ENCODE measurements at regions of chr22 and their contacts with region 1.

Region 1: GRCh38 chr22:23178512-23179254 is 1.6 kb upstream of the BCR start:
- DNase-seq: peak in 1 of 2 donors; percentile 69
- H3K4me3 ChIP-seq: no peak overlapping the region
- H3K27ac ChIP-seq: peak overlapping the region; percentile 86 to 87
- H3K4me1 ChIP-seq: peaks cover 5 to 8% of the 10 kb centered on the region in 2 donors
- H3K27me3 ChIP-seq: no peaks in the 10 kb centered on the region
- CTCF ChIP-seq: peak; percentile 90 to 96 (median 91)
- POLR2A ChIP-seq: no peak

Region 2: DNA sequence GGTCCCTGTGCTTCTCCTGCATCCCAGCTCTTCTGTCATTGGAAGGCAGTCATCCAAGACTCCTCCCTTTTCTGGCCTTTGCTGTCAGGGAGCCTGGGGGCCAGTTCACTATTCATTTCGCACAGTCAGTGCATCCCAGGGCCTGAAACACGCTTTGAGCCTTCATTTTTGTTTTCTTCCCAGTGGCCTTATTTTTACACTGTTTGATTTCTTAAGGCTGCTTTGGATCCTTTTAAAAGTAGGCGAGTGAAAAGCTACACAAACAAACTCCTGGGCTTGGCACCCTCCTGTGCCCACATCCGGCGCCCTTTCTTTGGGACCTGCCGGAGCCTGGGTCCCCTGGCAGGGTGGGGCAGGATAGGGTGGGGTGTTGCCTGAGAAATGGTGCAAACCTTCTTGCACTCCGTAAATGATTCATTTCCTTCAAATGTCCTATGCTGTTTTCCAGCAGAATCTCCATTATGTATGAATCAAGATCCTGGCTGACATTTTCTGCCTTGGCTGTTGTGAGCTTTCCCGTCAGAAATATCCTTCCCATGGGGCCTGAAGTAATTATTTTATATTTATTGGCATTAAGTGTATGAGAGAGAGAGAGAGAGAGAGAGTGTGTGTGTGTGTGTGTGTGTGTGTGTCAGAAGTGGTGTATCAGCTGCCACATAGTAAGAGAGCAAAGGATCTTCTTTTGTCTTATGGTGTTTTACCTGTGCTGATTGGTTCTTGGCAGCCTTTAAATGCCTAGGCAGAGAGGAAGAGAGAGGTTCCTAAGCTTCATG is 47.2 kb after region 1 on chr22:
- intact Hi-C with region 1: loop called (anchors 2 kb)
- DNase-seq: no peak
- H3K4me3 ChIP-seq: no peak overlapping the region
- H3K27ac ChIP-seq: peak overlapping the region; percentile 57 to 74
- H3K4me1 ChIP-seq: peaks cover 3% of the 10 kb centered on the region in 2 donors
- H3K27me3 ChIP-seq: no peaks in the 10 kb centered on the region
- CTCF ChIP-seq: no peak
- POLR2A ChIP-seq: no peak

Region 3: GRCh38 chr22:23281406-23282088 is 102.9 kb after region 1 on chr22:
- intact Hi-C with region 1: loop called (anchors 5 kb)
- DNase-seq: peak; percentile 87 to 91
- H3K4me3 ChIP-seq: peak overlapping the region in 2 of 3 donors; percentile 20 to 21
- H3K27ac ChIP-seq: peak overlapping the region; percentile 95 to 97
- H3K4me1 ChIP-seq: peaks cover 13 to 35% of the 10 kb centered on the region in 2 donors
- H3K27me3 ChIP-seq: no peaks in the 10 kb centered on the region
- CTCF ChIP-seq: peak; percentile 91 to 99 (median 94)
- POLR2A ChIP-seq: no peak

Region 4: GRCh38 chr22:24994070-24994763 is 1815.5 kb after region 1 on chr22:
- intact Hi-C with region 1: no loop called
- DNase-seq: peak; percentile 49 to 74
- H3K4me3 ChIP-seq: no peak overlapping the region
- H3K27ac ChIP-seq: peak overlapping the region; percentile 46 to 59
- H3K4me1 ChIP-seq: peaks cover 0 to 6% of the 10 kb centered on the region in 2 donors
- H3K27me3 ChIP-seq: no peaks in the 10 kb centered on the region
- CTCF ChIP-seq: peak in 2 of 3 donors; percentile 26 to 30
- POLR2A ChIP-seq: no peak

Measured in breast epithelium (tissue), 4 donors.